AG04449 (cell line): ENCODE measurements at regions of chr4 and their contacts with region 1.

Region 1: GRCh38 chr4:8403173-8403753 is 37.3 kb downstream of the ACOX3 start:
- DNase-seq: no peak
- H3K4me3 ChIP-seq: no peak overlapping the region
- CTCF ChIP-seq: peak; percentile 94

Region 2: GRCh38 chr4:8176547-8177399 is 226.5 kb before region 1 on chr4:
- CTCF ChIA-PET with region 1: interaction called, 27 read pairs
- POLR2A ChIA-PET with region 1: no interaction called
- DNase-seq: no peak
- H3K4me3 ChIP-seq: no peak overlapping the region
- CTCF ChIP-seq: peak; percentile 86

Region 3: GRCh38 chr4:8228319-8229250 is 174.7 kb before region 1 on chr4:
- CTCF ChIA-PET with region 1: interaction called, 26 read pairs
- POLR2A ChIA-PET with region 1: no interaction called
- DNase-seq: peak; percentile 16
- H3K4me3 ChIP-seq: no peak overlapping the region
- CTCF ChIP-seq: no peak

Region 4: DNA sequence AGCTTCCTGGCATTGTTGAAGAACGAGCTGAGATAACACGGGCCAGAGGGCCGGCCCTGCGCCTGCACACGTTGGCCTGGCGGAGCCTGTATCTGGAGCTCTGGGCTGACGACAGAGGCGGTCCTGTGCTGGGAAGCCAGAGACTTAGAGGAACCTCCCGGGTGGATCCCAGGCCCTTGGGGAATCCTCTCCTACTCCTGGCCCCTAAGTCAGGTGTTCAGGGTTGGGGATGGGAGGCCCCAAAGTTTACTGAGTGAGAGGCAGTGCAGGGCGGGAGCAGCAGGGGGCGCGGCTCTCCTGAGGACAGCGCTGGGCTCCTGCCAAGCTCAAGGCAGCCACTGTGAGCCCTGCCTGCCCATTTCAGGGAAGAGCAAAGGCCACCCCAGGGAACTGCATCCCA is 136.2 kb before region 1 on chr4:
- CTCF ChIA-PET with region 1: interaction called, 117 read pairs
- POLR2A ChIA-PET with region 1: no interaction called
- DNase-seq: no peak
- H3K4me3 ChIP-seq: no peak overlapping the region
- CTCF ChIP-seq: peak; percentile 73

Region 5: DNA sequence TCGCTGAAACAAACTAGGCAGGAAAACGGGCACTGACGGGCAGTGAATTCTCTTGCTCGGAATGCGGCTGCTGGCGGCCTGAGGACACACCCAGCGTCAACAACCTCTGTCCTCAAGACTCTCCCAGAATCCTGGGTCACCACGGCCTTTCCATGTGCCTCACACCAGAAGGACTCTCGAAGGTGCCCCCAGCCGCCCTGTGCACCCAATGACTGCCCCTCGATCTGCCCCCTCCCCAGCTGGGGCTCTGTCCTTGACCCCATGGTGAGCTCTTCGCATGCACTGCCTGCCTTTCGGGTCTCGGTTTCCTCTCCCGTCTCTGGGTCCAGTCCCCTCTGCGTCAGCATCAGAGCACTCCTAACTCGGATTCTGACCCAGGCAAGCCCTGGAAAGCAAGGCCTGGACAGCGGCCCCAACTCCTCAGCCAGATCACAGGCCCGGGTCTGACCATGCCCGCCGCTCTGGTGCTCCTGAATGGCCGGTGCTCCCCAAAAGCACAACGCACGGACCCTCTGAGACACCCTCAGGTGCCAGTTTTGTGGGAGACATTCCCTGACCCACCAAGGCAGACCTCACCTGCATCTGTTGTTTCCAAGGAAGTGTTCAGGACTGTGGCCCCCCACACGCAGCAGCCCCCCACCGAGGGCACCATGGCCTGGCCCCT is 18.7 kb before region 1 on chr4:
- CTCF ChIA-PET with region 1: interaction called, 11 read pairs
- POLR2A ChIA-PET with region 1: no interaction called
- DNase-seq: no peak
- H3K4me3 ChIP-seq: no peak overlapping the region
- CTCF ChIP-seq: no peak

Region 6: GRCh38 chr4:8391972-8392371 is 11.3 kb before region 1 on chr4:
- CTCF ChIA-PET with region 1: interaction called, 32 read pairs
- POLR2A ChIA-PET with region 1: interaction called, 3 read pairs
- DNase-seq: no peak
- H3K4me3 ChIP-seq: no peak overlapping the region
- CTCF ChIP-seq: no peak

Region 7: GRCh38 chr4:8419181-8420041 is 16.1 kb after region 1 on chr4:
- CTCF ChIA-PET with region 1: interaction called, 45 read pairs
- POLR2A ChIA-PET with region 1: no interaction called
- DNase-seq: no peak
- H3K4me3 ChIP-seq: no peak overlapping the region
- CTCF ChIP-seq: no peak